ENCODE measurements at regions of chr11 and their contacts with region 1.

Region 1: DNA sequence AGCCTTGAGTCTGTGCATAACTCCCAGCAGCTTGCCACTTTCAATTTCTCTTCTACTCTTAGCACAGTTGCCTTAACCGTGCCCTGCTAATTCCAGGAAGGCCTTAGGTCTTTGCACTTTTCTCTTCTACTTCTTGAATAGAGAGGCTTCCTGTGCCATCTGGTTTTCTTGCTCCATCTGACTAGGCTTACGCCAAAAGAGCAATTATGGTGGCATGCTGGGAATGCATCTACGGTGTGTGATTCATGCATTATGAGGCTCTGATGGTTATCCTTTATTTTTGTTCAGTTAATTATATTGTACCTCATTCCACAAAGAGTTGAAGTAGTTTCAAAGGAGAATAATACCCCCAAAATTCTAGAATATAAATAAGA is 29.4 kb downstream of the SIK2 start:
- DNase-seq: peak; percentile 55
- H3K4me3 Mint-ChIP-seq: no peak overlapping the region
- H3K27ac Mint-ChIP-seq: no peak overlapping the region
- H3K4me1 Mint-ChIP-seq: peaks cover 37% of the 10 kb centered on the region
- H3K27me3 Mint-ChIP-seq: no peaks in the 10 kb centered on the region
- CTCF ChIP-seq: no peak

Region 2: DNA sequence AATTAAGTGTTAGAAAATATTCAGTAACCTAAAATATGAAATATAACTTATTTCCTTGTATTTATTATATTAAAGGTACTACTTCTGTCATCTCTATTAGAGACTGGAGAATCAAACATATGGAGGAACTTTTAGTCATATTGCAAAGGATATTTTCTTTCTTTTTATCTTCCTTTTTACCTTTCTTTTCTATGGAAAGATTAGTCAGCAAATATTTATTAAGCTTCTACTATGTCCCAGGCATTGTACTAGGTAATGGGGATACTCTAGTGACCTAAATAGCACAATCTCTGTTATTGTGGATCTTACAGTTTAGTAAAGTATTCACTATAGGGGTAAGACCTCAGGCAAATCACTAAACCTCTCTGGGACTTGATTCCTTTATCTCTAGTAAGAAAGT is 11.1 kb before region 1 on chr11:
- CTCF ChIA-PET with region 1: interaction called, 3 read pairs
- POLR2A ChIA-PET with region 1: interaction called, 10 read pairs
- intact Hi-C with region 1: no loop called
- DNase-seq: no peak
- H3K4me3 Mint-ChIP-seq: no peak overlapping the region
- H3K27ac Mint-ChIP-seq: no peak overlapping the region
- H3K4me1 Mint-ChIP-seq: no peaks in the 10 kb centered on the region
- H3K27me3 Mint-ChIP-seq: no peaks in the 10 kb centered on the region
- CTCF ChIP-seq: no peak

Region 3: GRCh38 chr11:111674941-111675340 is 43.3 kb after region 1 on chr11:
- CTCF ChIA-PET with region 1: no interaction called
- POLR2A ChIA-PET with region 1: no interaction called
- intact Hi-C with region 1: no loop called
- DNase-seq: no peak
- H3K4me3 Mint-ChIP-seq: no peak overlapping the region
- H3K27ac Mint-ChIP-seq: no peak overlapping the region
- H3K4me1 Mint-ChIP-seq: no peaks in the 10 kb centered on the region
- H3K27me3 Mint-ChIP-seq: no peaks in the 10 kb centered on the region
- CTCF ChIP-seq: no peak